PC-9 (cell line): ENCODE measurements at regions of chr19 and their contacts with region 1.

Region 1: GRCh38 chr19:50922317-50922853 is 11.2 kb upstream of the KLK4 start:
- DNase-seq: peak; percentile 77 to 80
- H3K4me3 ChIP-seq: peak overlapping the region; percentile 36; the same call in 1 of the 2 replicates
- H3K27ac ChIP-seq: peak overlapping the region; percentile 32
- H3K4me1 ChIP-seq: peaks cover 37% of the 10 kb centered on the region
- H3K27me3 ChIP-seq: 0 out of 2 replicates have a peak, but pooled peaks cover under 1% of the 10 kb centered on the region
- CTCF ChIP-seq: peak; percentile 96

Region 2: DNA sequence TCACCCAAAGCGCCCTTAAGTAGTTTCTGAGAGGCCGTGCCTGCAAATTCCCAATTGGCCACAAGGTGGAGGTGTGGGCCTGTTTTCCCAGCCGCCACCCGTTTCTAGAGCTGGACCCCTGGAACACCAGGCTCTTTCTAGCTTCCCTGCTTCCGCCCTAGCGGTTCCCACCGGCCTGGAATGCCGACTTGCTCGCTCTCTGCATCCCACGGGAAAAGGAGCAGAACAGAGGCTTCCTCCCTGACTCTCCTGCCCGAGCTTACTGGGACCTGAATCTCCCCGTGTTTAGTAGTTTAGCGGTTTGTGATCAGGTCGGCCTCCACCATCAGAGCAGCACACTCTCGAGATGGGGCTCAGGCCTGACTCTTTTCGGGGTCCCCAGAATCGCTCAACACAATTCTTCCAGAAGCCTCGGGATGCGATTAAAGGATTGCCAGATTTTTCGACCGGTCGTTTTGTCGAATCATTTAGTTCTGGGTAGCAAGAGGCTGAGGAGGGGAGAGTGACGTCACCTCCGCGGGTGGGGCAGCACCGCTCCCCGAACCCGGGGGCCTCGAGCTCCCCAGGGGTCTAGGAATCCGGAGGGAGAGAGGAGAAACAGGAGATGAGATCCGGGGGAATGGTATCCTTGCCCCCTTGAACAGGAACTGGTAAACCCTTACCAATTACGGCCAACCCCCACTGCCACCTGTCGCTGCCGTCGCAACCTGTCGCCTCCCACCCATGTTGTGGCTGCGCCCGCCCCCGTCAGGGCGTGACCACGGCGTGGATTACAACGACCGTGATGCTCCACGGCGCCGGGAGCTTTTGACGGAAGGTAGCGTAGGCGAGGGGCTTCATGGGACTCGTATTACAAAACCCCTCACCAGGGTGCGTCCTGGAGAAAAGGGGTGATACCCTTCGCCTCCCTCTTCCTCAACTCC is 564.9 kb before region 1 on chr19:
- CTCF ChIA-PET with region 1: no interaction called
- POLR2A ChIA-PET with region 1: no interaction called
- intact Hi-C with region 1: loop called (anchors 2 kb)
- DNase-seq: peak; percentile 45 to 64
- H3K4me3 ChIP-seq: no peak overlapping the region
- H3K27ac ChIP-seq: no peak overlapping the region
- H3K4me1 ChIP-seq: no peaks in the 10 kb centered on the region
- H3K27me3 ChIP-seq: peaks cover 7% of the 10 kb centered on the region
- CTCF ChIP-seq: peak; percentile 94

Region 3: GRCh38 chr19:50705422-50706019 is 216.9 kb before region 1 on chr19:
- CTCF ChIA-PET with region 1: no interaction called
- POLR2A ChIA-PET with region 1: no interaction called
- intact Hi-C with region 1: loop called (anchors 1 kb)
- DNase-seq: peak; percentile 49 to 55
- H3K4me3 ChIP-seq: no peak overlapping the region
- H3K27ac ChIP-seq: no peak overlapping the region
- H3K4me1 ChIP-seq: no peaks in the 10 kb centered on the region
- H3K27me3 ChIP-seq: peaks cover 91% of the 10 kb centered on the region
- CTCF ChIP-seq: peak; percentile 75

Region 4: DNA sequence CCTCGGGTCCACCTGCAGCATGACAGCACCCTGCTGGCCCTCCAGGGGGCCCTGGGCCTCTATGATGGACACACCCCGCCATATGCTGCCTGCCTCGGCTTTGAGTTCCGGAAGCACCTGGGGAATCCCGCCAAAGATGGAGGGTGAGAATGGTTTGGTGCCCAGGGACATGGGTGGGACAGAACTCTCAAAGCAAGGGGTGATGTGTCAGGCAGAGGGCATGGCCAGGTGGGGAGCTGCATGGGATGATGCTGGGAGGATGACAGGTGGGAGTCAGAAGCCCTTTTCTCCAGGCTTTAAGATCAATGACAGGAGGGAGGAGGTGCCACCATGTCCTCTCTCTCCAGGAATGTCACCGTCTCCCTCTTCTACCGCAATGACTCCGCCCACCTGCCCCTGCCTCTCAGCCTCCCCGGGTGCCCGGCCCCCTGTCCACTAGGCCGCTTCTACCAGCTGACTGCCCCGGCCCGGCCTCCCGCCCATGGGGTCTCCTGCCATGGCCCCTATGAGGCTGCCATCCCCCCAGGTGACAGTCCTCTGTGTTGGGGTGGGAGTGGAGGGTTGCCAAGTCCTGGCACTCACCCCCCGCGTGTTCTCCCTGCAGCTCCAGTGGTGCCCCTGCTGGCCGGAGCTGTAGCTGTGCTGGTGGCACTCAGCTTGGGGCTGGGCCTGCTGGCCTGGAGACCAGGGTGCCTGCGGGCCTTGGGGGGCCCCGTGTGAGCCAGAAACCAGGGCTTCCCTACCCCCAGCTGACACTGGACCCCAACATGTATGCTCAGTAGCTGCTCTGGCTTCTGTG is 127.7 kb before region 1 on chr19:
- CTCF ChIA-PET with region 1: no interaction called
- POLR2A ChIA-PET with region 1: no interaction called
- intact Hi-C with region 1: loop called (anchors 5 kb)
- DNase-seq: peak in 1 of 2 experiments; percentile 43
- H3K4me3 ChIP-seq: no peak overlapping the region
- H3K27ac ChIP-seq: no peak overlapping the region
- H3K4me1 ChIP-seq: no peaks in the 10 kb centered on the region
- H3K27me3 ChIP-seq: no peaks in the 10 kb centered on the region
- CTCF ChIP-seq: peak; percentile 44; the same call in 1 of the 2 replicates

Region 5: GRCh38 chr19:50943074-50943828 is 20.9 kb after region 1 on chr19:
- CTCF ChIA-PET with region 1: no interaction called
- POLR2A ChIA-PET with region 1: no interaction called
- intact Hi-C with region 1: no loop called
- DNase-seq: peak in 1 of 2 experiments; percentile 38
- H3K4me3 ChIP-seq: no peak overlapping the region
- H3K27ac ChIP-seq: no peak overlapping the region
- H3K4me1 ChIP-seq: peaks cover 8% of the 10 kb centered on the region; the same call in 1 of the 2 replicates
- H3K27me3 ChIP-seq: no peaks in the 10 kb centered on the region
- CTCF ChIP-seq: no peak

Region 6: GRCh38 chr19:51097166-51097738 is 174.9 kb after region 1 on chr19:
- CTCF ChIA-PET with region 1: no interaction called
- POLR2A ChIA-PET with region 1: no interaction called
- intact Hi-C with region 1: loop called (anchors 2 kb)
- DNase-seq: peak; percentile 62 to 69
- H3K4me3 ChIP-seq: no peak overlapping the region
- H3K27ac ChIP-seq: no peak overlapping the region
- H3K4me1 ChIP-seq: no peaks in the 10 kb centered on the region
- H3K27me3 ChIP-seq: no peaks in the 10 kb centered on the region
- CTCF ChIP-seq: peak; percentile 85